ENCODE measurements at regions of chr12 and their contacts with region 1.

Region 1: GRCh38 chr12:2395354-2395977 is 342.7 kb downstream of the CACNA1C start:
- DNase-seq: no peak
- H3K4me3 ChIP-seq: no peak overlapping the region
- H3K27ac ChIP-seq: no peak overlapping the region
- H3K4me1 ChIP-seq: peaks cover 12% of the 10 kb centered on the region
- H3K27me3 ChIP-seq: no peaks in the 10 kb centered on the region
- CTCF ChIP-seq: peak; percentile 78 to 79

Region 2: DNA sequence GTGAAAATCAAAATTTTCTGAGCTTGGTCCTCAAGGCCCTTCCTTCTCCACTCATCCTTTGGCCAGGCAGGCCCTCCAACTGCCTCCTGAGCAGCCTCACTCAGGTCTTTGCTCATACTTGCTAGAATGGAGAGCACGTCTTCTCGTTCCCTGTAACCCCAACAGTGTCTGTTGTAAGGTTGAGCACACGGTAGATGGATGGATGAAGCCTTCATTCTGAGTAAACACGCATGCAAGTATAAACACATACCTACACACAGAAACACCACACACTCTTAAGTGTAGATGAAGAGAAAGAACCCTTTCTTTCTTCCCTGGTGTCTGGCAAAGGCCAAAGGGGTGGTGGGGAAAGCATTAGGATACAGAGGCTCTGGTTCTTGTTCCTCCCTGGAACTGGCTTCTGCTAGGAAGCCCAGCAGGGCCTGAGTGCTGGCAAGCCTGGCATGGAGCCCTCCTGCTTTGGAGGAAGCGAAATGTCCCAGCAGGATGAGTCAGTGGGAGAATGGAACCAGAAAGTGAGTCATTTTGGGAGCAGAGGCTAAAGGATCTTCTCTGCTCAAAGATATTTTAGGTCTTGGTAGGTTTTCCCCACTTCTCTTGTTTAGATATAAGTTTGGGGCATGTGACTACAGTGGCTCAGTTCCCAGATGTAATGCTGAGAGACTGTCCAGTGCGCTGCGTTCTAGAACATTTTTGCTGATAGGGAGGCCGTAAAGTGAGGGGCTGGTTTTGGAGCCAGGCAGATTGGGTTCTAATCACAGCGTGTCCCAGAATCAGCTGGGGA is 215.3 kb before region 1 on chr12:
- CTCF ChIA-PET with region 1: no interaction called
- dilution Hi-C with region 1: no loop called
- in situ Hi-C with region 1: no loop called
- intact Hi-C with region 1: loop called (anchors 10 kb)
- DNase-seq: peak; percentile 80
- H3K4me3 ChIP-seq: no peak overlapping the region
- H3K27ac ChIP-seq: no peak overlapping the region
- H3K4me1 ChIP-seq: peaks cover 12% of the 10 kb centered on the region
- H3K27me3 ChIP-seq: no peaks in the 10 kb centered on the region
- CTCF ChIP-seq: no peak